Activated CD4-positive, alpha-beta T cell treated with anti-CD3 and anti-CD28 coated beads for 36 hours (primary cell): ENCODE measurements at regions of chr9 and their contacts with region 1.

Region 1: DNA sequence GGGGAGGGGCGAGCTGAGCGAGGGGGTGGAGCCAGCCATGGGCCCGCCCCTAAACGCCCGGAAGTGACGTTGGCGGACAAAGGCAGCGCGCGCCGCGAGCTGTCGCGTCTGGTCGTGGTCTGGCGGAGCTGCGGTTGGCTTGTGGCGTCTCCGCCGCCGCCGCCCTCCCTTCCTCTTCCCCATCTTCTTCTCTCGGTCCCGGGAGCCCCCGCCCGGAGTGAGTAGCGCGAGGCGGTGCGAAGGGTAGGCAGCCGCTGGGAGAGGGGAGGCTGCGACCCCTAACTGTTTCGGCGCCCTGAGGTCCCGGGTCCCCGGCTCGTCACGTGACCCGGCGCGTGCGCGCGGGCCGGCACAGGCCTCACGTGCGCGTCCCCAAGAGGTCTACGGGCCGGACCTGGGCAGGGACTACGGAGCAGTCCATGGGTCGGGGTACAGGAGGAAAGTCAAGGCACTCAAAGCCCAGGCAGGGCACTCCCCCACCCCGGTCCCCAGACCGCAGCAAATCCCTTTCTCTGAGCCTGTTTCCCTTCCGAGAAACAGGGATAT is at the start of gene NTMT1:
- DNase-seq: peak; percentile 95
- ATAC-seq: peak; percentile 76
- H3K4me3 Mint-ChIP-seq: peak within 1 kb of the TSS; percentile 77
- H3K27ac Mint-ChIP-seq: peak within 1 kb of the TSS; percentile 93
- H3K4me1 Mint-ChIP-seq: peaks cover 52% of the 10 kb centered on the region
- H3K27me3 Mint-ChIP-seq: peaks cover 4% of the 10 kb centered on the region
- total RNA-seq, gene NTMT1: 50.1 to 69.2 TPM

Region 2: GRCh38 chr9:129036241-129036922 is 589.8 kb before region 1 on chr9 and contains the start of gene MIGA2:
- CTCF ChIA-PET with region 1: no interaction called
- POLR2A ChIA-PET with region 1: no interaction called
- intact Hi-C with region 1: loop called in 1 of 2 experiments (anchors 1 kb)
- DNase-seq: peak; percentile 96
- ATAC-seq: peak; percentile 99
- H3K4me3 Mint-ChIP-seq: peak within 1 kb of the TSS; percentile 98
- H3K27ac Mint-ChIP-seq: peak within 1 kb of the TSS; percentile 83
- H3K4me1 Mint-ChIP-seq: peaks cover 27% of the 10 kb centered on the region
- H3K27me3 Mint-ChIP-seq: no peaks in the 10 kb centered on the region
- total RNA-seq, gene MIGA2: 15.7 to 25.8 TPM

Region 3: DNA sequence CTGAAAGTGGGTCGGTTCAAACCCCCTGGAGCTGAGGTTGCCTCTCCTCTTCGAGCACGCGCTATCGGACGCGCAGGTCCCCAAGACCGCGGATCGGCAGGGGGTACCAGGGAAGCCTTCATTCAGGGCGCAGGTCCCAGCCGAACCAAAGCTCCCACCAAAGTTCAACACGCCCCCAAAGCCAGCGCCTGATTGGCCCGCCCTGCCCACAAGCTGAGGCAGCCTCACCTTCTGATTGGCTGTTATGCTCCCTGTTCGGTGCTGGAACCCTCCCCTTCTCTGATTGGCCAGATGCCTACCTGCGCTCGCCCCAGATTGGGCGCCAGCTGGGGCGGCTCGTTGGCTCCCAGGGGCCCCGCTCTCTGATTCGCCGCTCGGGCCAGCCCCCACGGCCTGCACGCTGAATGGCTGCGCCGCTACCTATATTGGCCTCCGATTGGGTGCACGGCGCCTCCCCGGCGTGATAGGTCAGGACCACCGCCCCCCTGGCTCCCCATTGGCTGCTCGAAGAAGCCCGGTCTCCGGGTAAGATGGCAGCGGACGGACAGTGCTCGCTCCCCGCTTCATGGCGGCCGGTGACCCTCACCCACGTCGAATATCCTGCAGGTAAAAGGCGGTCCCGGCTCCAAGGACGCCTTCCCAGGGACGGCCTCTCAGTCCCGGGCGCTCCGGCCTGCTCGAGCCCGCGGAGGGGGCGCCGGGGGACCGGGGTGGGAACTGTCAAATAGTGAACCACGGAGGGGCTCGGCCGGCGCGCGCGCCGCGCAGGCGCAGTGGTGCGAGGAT is 545.4 kb before region 1 on chr9 and contains the start of gene DOLPP1:
- CTCF ChIA-PET with region 1: no interaction called
- POLR2A ChIA-PET with region 1: no interaction called
- intact Hi-C with region 1: loop called in 1 of 2 experiments (anchors 1 kb)
- DNase-seq: peak; percentile 99
- ATAC-seq: peak; percentile 98
- H3K4me3 Mint-ChIP-seq: peak within 1 kb of the TSS; percentile 83
- H3K27ac Mint-ChIP-seq: peak within 1 kb of the TSS; percentile 63
- H3K4me1 Mint-ChIP-seq: peaks cover 20% of the 10 kb centered on the region
- H3K27me3 Mint-ChIP-seq: no peaks in the 10 kb centered on the region
- total RNA-seq, gene DOLPP1: 15.1 to 16.4 TPM

Region 4: GRCh38 chr9:129131300-129132145 is 494.6 kb before region 1 on chr9:
- CTCF ChIA-PET with region 1: interaction called, 96 read pairs
- POLR2A ChIA-PET with region 1: interaction called, 3 read pairs
- intact Hi-C with region 1: no loop called
- DNase-seq: peak; percentile 91
- ATAC-seq: peak; percentile 100
- H3K4me3 Mint-ChIP-seq: no peak overlapping the region
- H3K27ac Mint-ChIP-seq: no peak overlapping the region
- H3K4me1 Mint-ChIP-seq: peaks cover 6% of the 10 kb centered on the region
- H3K27me3 Mint-ChIP-seq: no peaks in the 10 kb centered on the region

Region 5: DNA sequence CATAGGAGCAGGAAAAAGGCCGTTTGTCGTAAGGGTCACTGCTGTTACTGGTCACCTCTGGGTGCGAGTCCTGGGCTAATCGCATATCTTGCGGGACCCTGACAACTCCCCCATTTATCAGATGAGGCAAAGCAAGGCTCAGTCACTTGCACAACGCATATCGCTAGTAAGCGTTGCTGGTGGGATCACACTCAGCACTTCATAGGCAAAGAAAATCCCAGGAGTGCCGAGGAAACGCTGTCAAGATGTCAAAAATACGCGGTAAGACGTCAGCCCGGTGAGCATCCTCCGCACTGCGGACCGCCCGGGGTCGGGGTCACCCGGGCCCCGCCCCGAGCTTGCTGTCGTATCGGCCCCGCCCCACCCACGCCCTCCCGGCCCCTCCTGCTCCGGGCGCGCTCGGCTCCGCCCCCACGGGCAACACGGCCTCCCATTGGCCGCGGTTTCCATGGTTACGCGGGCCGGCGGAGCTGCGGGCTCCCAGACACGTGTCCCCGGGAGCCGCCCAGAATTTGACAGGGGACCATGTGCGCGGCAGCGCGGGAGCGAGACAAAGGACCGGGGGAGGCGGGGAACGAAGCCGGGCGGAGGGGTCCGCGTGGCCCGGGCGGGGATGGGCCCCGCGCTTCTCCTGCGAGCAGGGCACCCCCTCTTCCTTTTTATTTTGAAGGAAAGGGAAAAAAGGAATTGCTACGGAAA is 367.9 kb before region 1 on chr9:
- CTCF ChIA-PET with region 1: no interaction called
- POLR2A ChIA-PET with region 1: no interaction called
- intact Hi-C with region 1: loop called in 1 of 2 experiments (anchors 1 kb)
- DNase-seq: peak; percentile 96
- ATAC-seq: peak; percentile 96
- H3K4me3 Mint-ChIP-seq: peak overlapping the region; percentile 61
- H3K27ac Mint-ChIP-seq: no peak overlapping the region
- H3K4me1 Mint-ChIP-seq: peaks cover 27% of the 10 kb centered on the region
- H3K27me3 Mint-ChIP-seq: peaks cover 15% of the 10 kb centered on the region

Region 6: GRCh38 chr9:129802851-129803675 is 176.9 kb after region 1 on chr9 and contains the start of gene TOR1B:
- CTCF ChIA-PET with region 1: no interaction called
- POLR2A ChIA-PET with region 1: no interaction called
- intact Hi-C with region 1: loop called in 1 of 2 experiments (anchors 1 kb)
- DNase-seq: peak; percentile 95
- ATAC-seq: peak; percentile 92
- H3K4me3 Mint-ChIP-seq: peak within 1 kb of the TSS; percentile 81
- H3K27ac Mint-ChIP-seq: peak within 1 kb of the TSS; percentile 90
- H3K4me1 Mint-ChIP-seq: peaks cover 25% of the 10 kb centered on the region
- H3K27me3 Mint-ChIP-seq: no peaks in the 10 kb centered on the region
- total RNA-seq, gene TOR1B: 18.0 to 22.1 TPM